Head of caudate nucleus (tissue), 42 donors: ENCODE measurements at regions of chr15 and their contacts with region 1.

Region 1: DNA sequence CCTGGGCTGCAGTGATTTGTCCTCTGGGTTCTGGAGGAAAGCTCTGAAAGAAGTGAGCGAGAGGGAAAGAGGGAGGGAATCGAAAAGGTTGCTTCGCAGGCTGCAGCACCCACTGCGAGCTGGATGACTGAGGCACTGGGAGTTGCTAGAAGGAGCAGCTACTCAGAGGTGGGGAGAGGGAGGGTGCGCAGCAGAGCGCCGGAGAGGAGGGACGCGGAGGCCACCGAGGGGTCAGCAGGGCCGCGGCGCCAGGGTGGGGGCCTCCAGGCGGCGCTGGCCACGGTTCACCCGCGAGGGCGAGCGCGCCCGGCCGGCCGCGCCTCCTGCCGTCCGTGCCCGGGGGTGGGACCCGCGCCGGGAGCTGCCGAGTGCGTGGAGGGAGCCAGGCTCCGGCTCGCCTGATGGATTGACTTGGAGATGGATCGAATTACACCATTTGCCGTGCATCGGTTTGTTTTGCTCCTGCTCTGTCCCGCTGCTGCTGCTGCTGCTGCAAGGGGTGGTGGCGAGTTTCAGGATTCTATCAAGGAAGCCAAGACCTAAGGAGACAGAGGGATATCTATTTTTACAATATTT is at the start of gene SEMA6D:
- DNase-seq: peak; percentile 60 to 93 (median 84)

Region 2: DNA sequence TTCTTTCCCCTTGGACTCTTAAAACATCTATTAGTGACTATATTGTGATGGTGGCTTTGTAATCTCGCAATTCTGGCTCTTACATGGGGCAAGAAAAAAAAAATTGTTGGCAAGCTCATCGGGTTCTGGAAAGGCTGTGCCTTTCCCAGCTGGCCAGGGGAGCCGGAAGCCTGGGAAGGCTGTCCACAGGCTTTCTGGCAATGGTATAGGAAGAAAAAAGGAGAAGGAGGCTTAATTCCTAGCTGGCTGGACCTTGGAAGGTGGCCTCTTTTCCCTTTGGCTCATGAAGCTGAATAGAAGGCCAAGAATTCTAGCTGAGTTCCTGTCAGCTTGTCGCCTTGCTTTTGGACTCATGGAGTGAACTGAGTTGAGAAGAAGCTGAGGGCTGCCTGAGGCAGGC is 243.3 kb before region 1 on chr15:
- intact Hi-C with region 1: loop called (anchors 5 kb)
- DNase-seq: peak in 22 of 42 donors; percentile 3 to 60 (median 29)

Region 3: GRCh38 chr15:47987908-47988532 is 270.9 kb after region 1 on chr15:
- intact Hi-C with region 1: loop called (anchors 5 kb)
- DNase-seq: peak in 29 of 42 donors; percentile 8 to 80 (median 49)

Region 4: GRCh38 chr15:48330855-48331795 is 614.0 kb after region 1 on chr15 and contains the start of gene DUT:
- intact Hi-C with region 1: loop called (anchors 10 kb)
- DNase-seq: peak; percentile 64 to 95 (median 90)